ENCODE measurements at regions of chr22 and their contacts with region 1.

Region 1: GRCh38 chr22:30500628-30501027 is 4.9 kb downstream of the SEC14L4 start:
- DNase-seq: no peak
- H3K4me3 ChIP-seq: no peak overlapping the region
- H3K27ac ChIP-seq: no peak overlapping the region
- H3K4me1 ChIP-seq: no peaks in the 10 kb centered on the region
- H3K27me3 ChIP-seq: peaks cover 4 to 22% of the 10 kb centered on the region in 2 donors
- CTCF ChIP-seq: no peak
- POLR2A ChIP-seq: no peak

Region 2: GRCh38 chr22:29710922-29711593 is 789.6 kb before region 1 on chr22:
- intact Hi-C with region 1: loop called (anchors 5 kb)
- DNase-seq: no peak
- H3K4me3 ChIP-seq: no peak overlapping the region
- H3K27ac ChIP-seq: no peak overlapping the region
- H3K4me1 ChIP-seq: no peaks in the 10 kb centered on the region
- H3K27me3 ChIP-seq: peaks cover 0 to 12% of the 10 kb centered on the region in 2 donors
- CTCF ChIP-seq: no peak
- POLR2A ChIP-seq: no peak

Region 3: GRCh38 chr22:30453731-30454510 is 46.7 kb before region 1 on chr22:
- intact Hi-C with region 1: no loop called
- DNase-seq: no peak
- H3K4me3 ChIP-seq: no peak overlapping the region
- H3K27ac ChIP-seq: no peak overlapping the region
- H3K4me1 ChIP-seq: no peaks in the 10 kb centered on the region
- H3K27me3 ChIP-seq: no peaks in the 10 kb centered on the region
- CTCF ChIP-seq: no peak
- POLR2A ChIP-seq: no peak

Region 4: GRCh38 chr22:30547188-30547587 is 46.6 kb after region 1 on chr22:
- intact Hi-C with region 1: no loop called
- DNase-seq: no peak
- H3K4me3 ChIP-seq: no peak overlapping the region
- H3K27ac ChIP-seq: no peak overlapping the region
- H3K4me1 ChIP-seq: no peaks in the 10 kb centered on the region
- H3K27me3 ChIP-seq: peaks cover 0 to 18% of the 10 kb centered on the region in 2 donors
- CTCF ChIP-seq: no peak
- POLR2A ChIP-seq: no peak

Measured in breast epithelium (tissue), 4 donors.